ENCODE measurements at regions of chr20 and their contacts with region 1.

Region 1: GRCh38 chr20:58309575-58310290 is at the start of gene RAB22A:
- DNase-seq: peak; percentile 81
- H3K4me3 Mint-ChIP-seq: peak within 1 kb of the TSS; percentile 93
- H3K27ac Mint-ChIP-seq: peak within 1 kb of the TSS; percentile 90
- H3K4me1 Mint-ChIP-seq: peaks cover 72% of the 10 kb centered on the region
- H3K27me3 Mint-ChIP-seq: no peaks in the 10 kb centered on the region
- total RNA-seq, gene RAB22A: 9.3 to 9.8 TPM

Region 2: GRCh38 chr20:57622579-57623377 is 687.0 kb before region 1 on chr20:
- CTCF ChIA-PET with region 1: no interaction called
- intact Hi-C with region 1: loop called (anchors 1 kb)
- DNase-seq: peak; percentile 88
- H3K4me3 Mint-ChIP-seq: no peak overlapping the region
- H3K27ac Mint-ChIP-seq: no peak overlapping the region
- H3K4me1 Mint-ChIP-seq: peaks cover 71% of the 10 kb centered on the region
- H3K27me3 Mint-ChIP-seq: no peaks in the 10 kb centered on the region

Region 3: GRCh38 chr20:58251921-58252591 is 57.7 kb before region 1 on chr20:
- CTCF ChIA-PET with region 1: no interaction called
- intact Hi-C with region 1: loop called (anchors 2 kb)
- DNase-seq: no peak
- H3K4me3 Mint-ChIP-seq: no peak overlapping the region
- H3K27ac Mint-ChIP-seq: peak overlapping the region; percentile 18
- H3K4me1 Mint-ChIP-seq: peaks cover 39% of the 10 kb centered on the region
- H3K27me3 Mint-ChIP-seq: no peaks in the 10 kb centered on the region

Region 4: DNA sequence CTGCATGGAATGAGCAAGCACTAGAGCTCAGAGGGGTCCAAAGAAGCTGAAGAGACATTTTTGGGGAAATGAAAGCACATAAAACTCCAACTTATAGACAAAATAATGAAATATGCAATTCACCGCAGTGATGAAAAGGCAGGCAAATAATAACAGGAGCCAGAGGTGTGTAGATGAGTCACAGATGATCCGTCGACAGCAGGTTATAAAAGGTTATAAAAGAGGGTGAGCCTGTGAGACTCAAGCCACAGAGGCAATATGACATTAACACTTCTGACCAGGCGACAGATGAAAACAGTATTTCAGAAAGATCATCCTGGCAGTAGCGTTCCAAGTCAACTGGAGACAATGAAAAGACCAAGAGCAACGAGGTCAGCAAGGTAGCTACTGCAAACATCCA is 45.5 kb before region 1 on chr20:
- CTCF ChIA-PET with region 1: no interaction called
- intact Hi-C with region 1: no loop called
- DNase-seq: no peak
- H3K4me3 Mint-ChIP-seq: no peak overlapping the region
- H3K27ac Mint-ChIP-seq: no peak overlapping the region
- H3K4me1 Mint-ChIP-seq: peaks cover 23% of the 10 kb centered on the region
- H3K27me3 Mint-ChIP-seq: no peaks in the 10 kb centered on the region

Region 5: DNA sequence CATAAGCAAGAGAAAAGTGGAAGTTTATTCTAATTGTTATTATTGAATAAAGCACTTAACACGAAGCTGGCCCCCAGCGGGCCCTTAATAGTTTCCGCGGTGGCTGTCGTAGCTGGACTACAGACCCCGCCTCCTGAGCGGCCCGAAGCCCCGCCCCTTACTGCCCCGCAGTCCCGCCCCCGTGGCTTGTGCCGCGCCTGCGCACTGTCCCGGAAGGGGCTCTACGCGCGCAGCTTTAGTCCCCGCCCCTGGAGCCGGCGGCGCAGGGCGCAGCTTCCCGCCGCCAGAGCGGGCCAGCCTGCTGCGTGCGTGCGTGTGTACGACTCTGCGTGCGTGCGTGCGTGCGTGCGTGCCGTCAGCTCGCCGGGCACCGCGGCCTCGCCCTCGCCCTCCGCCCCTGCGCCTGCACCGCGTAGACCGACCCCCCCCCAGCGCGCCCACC is 79.2 kb after region 1 on chr20 and contains the start of gene VAPB:
- CTCF ChIA-PET with region 1: no interaction called
- intact Hi-C with region 1: loop called (anchors 1 kb)
- DNase-seq: peak; percentile 96
- H3K4me3 Mint-ChIP-seq: peak within 1 kb of the TSS; percentile 96
- H3K27ac Mint-ChIP-seq: peak within 1 kb of the TSS; percentile 90
- H3K4me1 Mint-ChIP-seq: peaks cover 42% of the 10 kb centered on the region
- H3K27me3 Mint-ChIP-seq: no peaks in the 10 kb centered on the region
- total RNA-seq, gene VAPB: 26.8 to 27.9 TPM

Region 6: GRCh38 chr20:59032023-59032712 is 722.4 kb after region 1 on chr20 and contains the start of gene ATP5F1E:
- CTCF ChIA-PET with region 1: no interaction called
- intact Hi-C with region 1: loop called (anchors 10 kb)
- DNase-seq: peak; percentile 95
- H3K4me3 Mint-ChIP-seq: peak within 1 kb of the TSS; percentile 94
- H3K27ac Mint-ChIP-seq: peak within 1 kb of the TSS; percentile 93
- H3K4me1 Mint-ChIP-seq: peaks cover 75% of the 10 kb centered on the region
- H3K27me3 Mint-ChIP-seq: no peaks in the 10 kb centered on the region
- total RNA-seq, gene ATP5F1E: 74.5 to 86.3 TPM

Region 7: GRCh38 chr20:59940174-59940971 is 1630.6 kb after region 1 on chr20 and contains the starts of genes FAM217B and PPP1R3D:
- CTCF ChIA-PET with region 1: no interaction called
- intact Hi-C with region 1: loop called (anchors 5 kb)
- DNase-seq: peak; percentile 93
- H3K4me3 Mint-ChIP-seq: peak within 1 kb of the TSS; percentile 92
- H3K27ac Mint-ChIP-seq: peak within 1 kb of the TSS; percentile 97
- H3K4me1 Mint-ChIP-seq: peaks cover 35% of the 10 kb centered on the region
- H3K27me3 Mint-ChIP-seq: no peaks in the 10 kb centered on the region
- total RNA-seq, gene FAM217B: 14.6 to 15.4 TPM
- total RNA-seq, gene PPP1R3D: 3.9 to 4.1 TPM

Measured in activated naive CD4-positive, alpha-beta T cell treated with anti-CD3 and anti-CD28 coated beads for 36 hours (primary cell).